Vagina (tissue), 2 donors: ENCODE measurements at regions of chr19 and their contacts with region 1.

Region 1: GRCh38 chr19:48108997-48109782 is 1.4 kb downstream of the PLA2G4C start:
- DNase-seq: no peak
- H3K4me3 ChIP-seq: no peak overlapping the region
- H3K27ac ChIP-seq: peak overlapping the region; percentile 92
- H3K4me1 ChIP-seq: peaks cover 29% of the 10 kb centered on the region
- H3K27me3 ChIP-seq: no peaks in the 10 kb centered on the region
- CTCF ChIP-seq: no peak
- POLR2A ChIP-seq: no peak

Region 2: GRCh38 chr19:46648060-46648960 is 1460.9 kb before region 1 on chr19:
- intact Hi-C with region 1: no loop called
- DNase-seq: no peak
- H3K4me3 ChIP-seq: no peak overlapping the region
- H3K27ac ChIP-seq: no peak overlapping the region
- H3K4me1 ChIP-seq: no peaks in the 10 kb centered on the region
- H3K27me3 ChIP-seq: no peaks in the 10 kb centered on the region
- CTCF ChIP-seq: no peak
- POLR2A ChIP-seq: no peak

Region 3: GRCh38 chr19:48152551-48152950 is 43.4 kb after region 1 on chr19:
- intact Hi-C with region 1: loop called (anchors 5 kb)
- DNase-seq: no peak
- H3K4me3 ChIP-seq: no peak overlapping the region
- H3K27ac ChIP-seq: no peak overlapping the region
- H3K4me1 ChIP-seq: no peaks in the 10 kb centered on the region
- H3K27me3 ChIP-seq: no peaks in the 10 kb centered on the region
- CTCF ChIP-seq: peak; percentile 72 to 84 (median 81)
- POLR2A ChIP-seq: no peak